ENCODE measurements at regions of chr3 and their contacts with region 1.

Region 1: GRCh38 chr3:134485718-134486576 is at the starts of genes ANAPC13 and CEP63:
- DNase-seq: peak; percentile 87 to 99 (median 93)
- ATAC-seq: peak; percentile 80
- H3K4me3 ChIP-seq: peak within 1 kb of the TSS; percentile 88 to 96
- H3K4me3 Mint-ChIP-seq: peak within 1 kb of the TSS; percentile 100
- H3K27ac ChIP-seq: peak within 1 kb of the TSS; percentile 88 to 96
- H3K27ac Mint-ChIP-seq: peak within 1 kb of the TSS; percentile 99
- H3K4me1 ChIP-seq: peaks cover 36% of the 10 kb centered on the region
- H3K4me1 Mint-ChIP-seq: peaks cover 60% of the 10 kb centered on the region
- H3K27me3 ChIP-seq: no peaks in the 10 kb centered on the region
- H3K27me3 Mint-ChIP-seq: no peaks in the 10 kb centered on the region
- CTCF ChIP-seq: no peak
- total RNA-seq, gene ANAPC13: 15.5 to 15.9 TPM
- total RNA-seq, gene CEP63: 14.6 to 16.9 TPM

Region 2: DNA sequence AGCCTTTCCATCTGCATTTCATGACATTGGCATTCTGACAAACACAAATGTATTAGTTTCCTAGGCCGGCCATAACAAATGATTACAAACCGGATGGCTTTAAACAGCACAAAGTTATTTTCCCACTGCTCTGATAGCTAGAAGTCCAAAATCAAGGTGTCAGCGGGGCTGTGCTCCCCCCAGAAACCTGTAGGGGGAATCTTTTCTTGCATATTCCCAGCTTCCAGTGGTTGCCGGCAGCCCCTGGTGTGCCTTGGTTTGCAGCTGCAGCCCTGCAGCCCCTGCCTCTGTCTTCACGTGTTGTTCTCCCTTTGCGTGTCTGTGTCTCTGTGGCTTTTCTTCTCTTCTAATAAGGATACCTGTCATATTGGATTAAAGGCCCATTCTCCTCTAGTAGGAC is 991.5 kb before region 1 on chr3:
- CTCF ChIA-PET with region 1: no interaction called
- POLR2A ChIA-PET with region 1: no interaction called
- intact Hi-C with region 1: loop called in 1 of 2 experiments (anchors 10 kb)
- DNase-seq: peak in 2 of 9 experiments; percentile 17 to 30
- ATAC-seq: no peak
- H3K4me3 ChIP-seq: no peak overlapping the region
- H3K4me3 Mint-ChIP-seq: no peak overlapping the region
- H3K27ac ChIP-seq: no peak overlapping the region
- H3K27ac Mint-ChIP-seq: peak overlapping the region; percentile 78
- H3K4me1 ChIP-seq: peaks cover 53% of the 10 kb centered on the region
- H3K4me1 Mint-ChIP-seq: peaks cover 65% of the 10 kb centered on the region
- H3K27me3 ChIP-seq: no peaks in the 10 kb centered on the region
- H3K27me3 Mint-ChIP-seq: no peaks in the 10 kb centered on the region
- CTCF ChIP-seq: no peak

Region 3: GRCh38 chr3:133661454-133662277 is 824.3 kb before region 1 on chr3 and contains the start of gene TOPBP1:
- CTCF ChIA-PET with region 1: no interaction called
- POLR2A ChIA-PET with region 1: interaction called, 4 read pairs
- intact Hi-C with region 1: loop called (anchors 2 kb)
- DNase-seq: peak; percentile 58 to 92 (median 87)
- ATAC-seq: peak; percentile 82
- H3K4me3 ChIP-seq: peak within 1 kb of the TSS; percentile 86 to 90
- H3K4me3 Mint-ChIP-seq: peak within 1 kb of the TSS; percentile 98
- H3K27ac ChIP-seq: peak within 1 kb of the TSS; percentile 83 to 85
- H3K27ac Mint-ChIP-seq: peak within 1 kb of the TSS; percentile 98
- H3K4me1 ChIP-seq: peaks cover 26% of the 10 kb centered on the region
- H3K4me1 Mint-ChIP-seq: peaks cover 45% of the 10 kb centered on the region
- H3K27me3 ChIP-seq: no peaks in the 10 kb centered on the region
- H3K27me3 Mint-ChIP-seq: no peaks in the 10 kb centered on the region
- CTCF ChIP-seq: no peak
- total RNA-seq, gene TOPBP1: 32.4 to 33.9 TPM

Region 4: DNA sequence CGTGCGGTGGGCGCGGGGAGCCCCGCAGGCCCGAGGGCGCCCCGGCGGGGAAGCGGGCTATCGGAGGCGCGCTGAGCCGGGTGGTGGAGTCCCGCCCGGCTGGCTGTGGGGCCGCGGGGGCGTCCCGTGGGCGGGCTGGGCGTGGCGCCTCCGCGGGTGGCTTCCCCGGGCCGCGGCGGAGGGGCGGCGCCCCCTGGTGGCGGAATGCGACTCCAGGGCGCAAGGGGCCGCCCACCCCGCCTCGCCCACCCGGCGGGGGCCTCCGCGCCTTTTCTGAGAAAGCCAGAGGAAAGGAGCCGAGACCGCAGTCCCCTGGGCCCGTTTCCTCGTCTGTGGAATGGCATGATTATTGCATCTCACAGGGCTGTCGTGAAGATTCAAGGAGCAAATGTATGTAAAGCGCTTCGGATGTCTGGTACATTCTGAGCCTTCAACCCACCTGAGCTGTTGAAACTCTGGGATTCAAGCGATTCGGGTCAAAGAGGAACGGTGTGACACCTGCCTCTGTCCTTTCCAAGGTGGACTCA is 558.3 kb before region 1 on chr3:
- CTCF ChIA-PET with region 1: no interaction called
- POLR2A ChIA-PET with region 1: no interaction called
- intact Hi-C with region 1: loop called in 1 of 2 experiments (anchors 5 kb)
- DNase-seq: peak; percentile 57 to 89 (median 79)
- ATAC-seq: peak; percentile 98
- H3K4me3 ChIP-seq: peak overlapping the region; percentile 43 to 67
- H3K4me3 Mint-ChIP-seq: peak overlapping the region; percentile 73
- H3K27ac ChIP-seq: no peak overlapping the region
- H3K27ac Mint-ChIP-seq: no peak overlapping the region
- H3K4me1 ChIP-seq: peaks cover 13% of the 10 kb centered on the region
- H3K4me1 Mint-ChIP-seq: peaks cover 14% of the 10 kb centered on the region
- H3K27me3 ChIP-seq: peaks cover 0 to 4% of the 10 kb centered on the region in 2 experiments
- H3K27me3 Mint-ChIP-seq: peaks cover 8% of the 10 kb centered on the region
- CTCF ChIP-seq: peak; percentile 76

Region 5: DNA sequence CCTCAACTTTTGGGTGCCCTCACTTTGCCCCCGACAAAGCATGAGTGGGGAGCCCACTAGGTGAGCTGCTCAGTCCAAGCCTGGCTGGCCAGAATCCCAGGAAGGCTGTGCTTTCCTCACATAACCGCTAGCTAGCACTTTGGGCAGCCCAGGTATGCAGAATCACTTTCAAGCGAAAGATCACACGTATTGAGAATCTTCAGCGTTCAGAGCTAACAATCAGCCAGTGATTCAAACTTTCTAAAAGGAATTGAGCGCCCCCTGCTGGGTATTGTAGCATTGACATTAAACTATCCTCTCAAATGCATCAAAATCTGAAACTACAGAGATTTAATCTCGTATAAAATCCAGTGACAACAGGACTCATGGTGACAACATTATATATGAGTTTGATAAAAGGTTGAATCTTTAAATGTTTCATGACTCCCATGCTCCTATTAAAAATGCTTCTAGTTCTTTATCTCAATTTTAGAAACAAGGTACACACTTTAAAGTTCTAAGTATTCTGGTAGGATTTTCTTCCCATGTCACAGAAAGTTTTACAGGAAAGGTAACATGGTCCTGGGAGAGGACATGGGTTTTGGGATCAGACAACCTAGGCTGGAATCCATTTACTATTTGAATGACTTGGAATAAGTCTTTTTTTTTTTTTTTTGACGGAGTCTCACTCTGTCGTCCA is 11.9 kb before region 1 on chr3:
- CTCF ChIA-PET with region 1: interaction called, 71 read pairs
- POLR2A ChIA-PET with region 1: interaction called, 7 read pairs
- intact Hi-C with region 1: no loop called
- DNase-seq: peak; percentile 55 to 85 (median 75)
- ATAC-seq: peak; percentile 85
- H3K4me3 ChIP-seq: no peak overlapping the region
- H3K4me3 Mint-ChIP-seq: no peak overlapping the region
- H3K27ac ChIP-seq: no peak overlapping the region
- H3K27ac Mint-ChIP-seq: no peak overlapping the region
- H3K4me1 ChIP-seq: peaks cover 4% of the 10 kb centered on the region
- H3K4me1 Mint-ChIP-seq: peaks cover 5% of the 10 kb centered on the region
- H3K27me3 ChIP-seq: no peaks in the 10 kb centered on the region
- H3K27me3 Mint-ChIP-seq: no peaks in the 10 kb centered on the region
- CTCF ChIP-seq: peak; percentile 83

Region 6: DNA sequence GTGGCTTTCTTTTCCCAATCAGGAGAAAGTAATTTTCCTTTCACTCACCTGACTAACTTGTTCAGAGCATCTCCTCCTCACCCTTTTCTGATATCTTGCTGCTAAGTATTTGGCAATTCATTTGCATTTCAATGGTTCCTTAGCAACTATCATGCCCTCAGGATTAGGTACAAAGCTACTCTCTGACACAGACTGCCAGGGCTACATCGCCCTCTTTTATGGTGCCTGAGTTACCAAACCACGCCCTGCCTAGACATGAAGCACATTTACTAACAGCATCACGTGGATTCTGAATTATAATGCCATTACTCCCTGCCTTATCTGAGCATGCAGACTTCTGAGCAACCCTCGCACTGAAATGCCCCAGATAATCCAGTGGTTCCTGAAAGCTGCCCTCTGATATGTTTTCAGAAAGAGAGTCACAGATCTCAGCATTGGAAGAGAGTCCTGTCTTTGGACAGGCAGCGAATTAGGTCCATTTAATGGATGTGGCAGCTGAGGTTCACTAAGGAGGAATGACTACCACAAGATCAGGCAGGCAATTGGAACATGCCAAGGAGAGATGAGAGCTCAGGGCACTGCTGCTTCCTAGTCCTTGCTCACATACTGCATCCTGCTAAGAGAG is 323.6 kb after region 1 on chr3:
- CTCF ChIA-PET with region 1: no interaction called
- POLR2A ChIA-PET with region 1: no interaction called
- intact Hi-C with region 1: no loop called
- DNase-seq: no peak
- ATAC-seq: no peak
- H3K4me3 ChIP-seq: no peak overlapping the region
- H3K4me3 Mint-ChIP-seq: no peak overlapping the region
- H3K27ac ChIP-seq: no peak overlapping the region
- H3K27ac Mint-ChIP-seq: no peak overlapping the region
- H3K4me1 ChIP-seq: no peaks in the 10 kb centered on the region
- H3K4me1 Mint-ChIP-seq: no peaks in the 10 kb centered on the region
- H3K27me3 ChIP-seq: no peaks in the 10 kb centered on the region
- H3K27me3 Mint-ChIP-seq: peaks cover 8% of the 10 kb centered on the region
- CTCF ChIP-seq: no peak

Region 7: DNA sequence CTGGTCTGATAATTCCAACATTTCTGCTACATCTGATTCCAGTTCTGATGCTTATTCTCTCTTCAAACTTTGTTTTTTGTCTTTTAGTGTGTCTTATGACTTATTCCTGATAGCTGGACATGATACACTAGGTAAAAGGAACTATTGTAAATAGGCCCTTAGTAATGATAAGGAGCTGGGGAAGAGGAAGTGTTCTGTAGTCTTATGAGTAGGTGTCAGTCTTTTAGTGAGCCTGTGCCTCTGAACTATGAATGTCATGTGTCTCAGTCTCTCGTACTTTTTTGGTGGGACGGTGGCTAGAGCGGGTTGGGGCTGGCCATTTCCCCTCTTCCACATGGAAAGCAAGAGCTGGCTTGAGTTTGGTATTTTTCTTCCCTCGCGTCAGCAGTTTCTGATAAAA is 1805.4 kb after region 1 on chr3:
- CTCF ChIA-PET with region 1: no interaction called
- POLR2A ChIA-PET with region 1: no interaction called
- intact Hi-C with region 1: no loop called
- DNase-seq: no peak
- ATAC-seq: no peak
- H3K4me3 ChIP-seq: no peak overlapping the region
- H3K4me3 Mint-ChIP-seq: no peak overlapping the region
- H3K27ac ChIP-seq: no peak overlapping the region
- H3K27ac Mint-ChIP-seq: no peak overlapping the region
- H3K4me1 ChIP-seq: no peaks in the 10 kb centered on the region
- H3K4me1 Mint-ChIP-seq: peaks cover 2% of the 10 kb centered on the region
- H3K27me3 ChIP-seq: no peaks in the 10 kb centered on the region
- H3K27me3 Mint-ChIP-seq: no peaks in the 10 kb centered on the region
- CTCF ChIP-seq: no peak

Measured in CD8-positive, alpha-beta T cell (primary cell).